GM12878 (cell line): ENCODE measurements at regions of chr7 and their contacts with region 1.

Region 1: GRCh38 chr7:97179454-97180104 is 62.1 kb downstream of the SDHAF3 start:
- DNase-seq: peak; percentile 8
- ATAC-seq: peak; percentile 89
- H3K4me3 ChIP-seq: no peak overlapping the region
- H3K27ac ChIP-seq: no peak overlapping the region
- H3K4me1 ChIP-seq: no peaks in the 10 kb centered on the region
- H3K27me3 ChIP-seq: no peaks in the 10 kb centered on the region
- CTCF ChIP-seq: peak; percentile 62 to 84 (median 71)
- EP300 ChIP-seq: no peak
- POLR2A ChIP-seq: no peak
- RAD21 ChIP-seq: peak; percentile 68

Region 2: GRCh38 chr7:97145068-97145467 is 34.5 kb before region 1 on chr7:
- CTCF ChIA-PET with region 1: interaction called, 10 read pairs
- POLR2A ChIA-PET with region 1: no interaction called
- RAD21 ChIA-PET with region 1: interaction called, 4 read pairs
- SMC1A ChIA-PET with region 1: interaction called, 5 read pairs
- in situ Hi-C with region 1: no loop called
- intact Hi-C with region 1: loop called (anchors 2 kb)
- DNase-seq: no peak
- ATAC-seq: peak; percentile 47; the same call in 2 of the 3 replicates
- H3K4me3 ChIP-seq: no peak overlapping the region
- H3K27ac ChIP-seq: no peak overlapping the region
- H3K4me1 ChIP-seq: no peaks in the 10 kb centered on the region
- H3K27me3 ChIP-seq: no peaks in the 10 kb centered on the region
- CTCF ChIP-seq: peak in 2 of 3 experiments; percentile 19 to 34; a peak in 3 of 6 replicates
- EP300 ChIP-seq: no peak
- POLR2A ChIP-seq: no peak
- RAD21 ChIP-seq: peak; percentile 67